PC-9 (cell line): ENCODE measurements at regions of chr3 and their contacts with region 1.

Region 1: GRCh38 chr3:172717493-172718088 is 6.7 kb upstream of the NCEH1 start:
- DNase-seq: no peak
- H3K4me3 ChIP-seq: no peak overlapping the region
- H3K27ac ChIP-seq: no peak overlapping the region
- H3K4me1 ChIP-seq: peaks cover 44% of the 10 kb centered on the region
- H3K27me3 ChIP-seq: no peaks in the 10 kb centered on the region
- CTCF ChIP-seq: peak; percentile 53; the same call in 1 of the 2 replicates

Region 2: DNA sequence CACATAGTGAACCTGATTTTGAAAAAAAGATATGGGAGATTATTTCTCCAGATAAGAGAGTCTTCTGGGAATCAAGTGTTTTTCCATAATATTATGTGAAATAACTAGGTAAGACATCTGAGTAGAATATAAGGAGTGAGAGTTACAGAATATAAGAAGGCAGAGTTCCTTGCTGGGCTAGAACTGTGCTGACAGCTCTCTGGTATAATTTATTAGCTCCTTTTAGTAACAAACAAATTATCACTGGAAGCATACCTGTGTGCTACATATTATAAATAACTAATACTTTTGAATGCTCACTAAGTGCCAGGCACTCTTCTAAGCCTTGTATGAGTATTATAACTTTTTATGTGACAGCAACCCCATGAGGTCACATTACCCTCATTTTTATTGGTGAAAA is 175.5 kb before region 1 on chr3:
- CTCF ChIA-PET with region 1: no interaction called
- POLR2A ChIA-PET with region 1: interaction called, 18 read pairs
- intact Hi-C with region 1: no loop called
- DNase-seq: no peak
- H3K4me3 ChIP-seq: no peak overlapping the region
- H3K27ac ChIP-seq: peak overlapping the region; percentile 74
- H3K4me1 ChIP-seq: peaks cover 47% of the 10 kb centered on the region
- H3K27me3 ChIP-seq: no peaks in the 10 kb centered on the region
- CTCF ChIP-seq: no peak

Region 3: DNA sequence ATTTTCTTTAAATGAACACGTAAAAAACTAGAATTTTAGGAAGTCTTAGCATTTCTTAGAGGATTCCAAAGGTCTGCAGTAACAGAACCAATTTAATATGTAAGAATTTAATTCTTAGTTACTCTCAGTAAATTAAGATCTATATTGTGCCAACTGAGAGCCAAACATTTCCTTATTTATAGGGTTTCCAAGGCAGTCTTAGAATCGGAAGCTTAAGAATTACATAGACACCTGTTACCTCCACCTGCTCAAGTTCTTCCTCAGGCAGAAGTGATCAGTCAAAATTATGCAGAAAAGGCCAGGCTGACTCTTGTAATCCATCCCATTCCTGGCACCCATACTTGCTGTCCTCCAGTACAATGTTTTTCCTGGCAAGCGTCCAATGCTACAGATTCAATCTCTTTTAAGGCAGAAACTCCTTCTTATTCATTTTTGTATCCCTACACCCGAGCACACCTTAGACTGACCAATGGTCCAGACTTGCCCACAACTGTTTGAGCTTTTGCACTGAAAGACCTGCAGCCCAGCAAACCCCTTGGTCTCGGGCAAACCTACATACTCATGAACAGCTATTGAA is 71.1 kb before region 1 on chr3:
- CTCF ChIA-PET with region 1: no interaction called
- POLR2A ChIA-PET with region 1: no interaction called
- intact Hi-C with region 1: no loop called
- DNase-seq: peak in 1 of 2 experiments; percentile 63
- H3K4me3 ChIP-seq: no peak overlapping the region
- H3K27ac ChIP-seq: no peak overlapping the region
- H3K4me1 ChIP-seq: peaks cover 6% of the 10 kb centered on the region; the same call in 1 of the 2 replicates
- H3K27me3 ChIP-seq: no peaks in the 10 kb centered on the region
- CTCF ChIP-seq: no peak

Region 4: DNA sequence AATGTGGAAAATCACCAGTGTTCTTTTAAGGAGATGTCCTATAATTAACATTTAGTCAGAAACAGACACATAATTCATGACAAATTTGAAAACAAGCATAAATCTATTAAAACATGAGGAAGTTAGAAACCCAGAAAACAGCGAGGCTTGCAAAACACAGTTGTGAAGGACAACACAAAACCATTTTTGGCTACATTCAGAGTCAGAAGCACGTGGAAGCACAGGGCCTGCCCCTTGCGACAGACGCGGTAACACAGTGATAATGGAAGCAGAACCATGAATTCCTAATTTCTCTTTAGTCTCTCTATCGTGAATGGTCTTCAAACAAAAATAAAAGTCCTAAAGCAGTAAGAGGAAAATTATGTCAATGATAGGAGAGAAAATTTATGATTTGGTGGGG is 19.0 kb before region 1 on chr3:
- CTCF ChIA-PET with region 1: interaction called, 9 read pairs
- POLR2A ChIA-PET with region 1: interaction called, 11 read pairs
- intact Hi-C with region 1: no loop called
- DNase-seq: no peak
- H3K4me3 ChIP-seq: no peak overlapping the region
- H3K27ac ChIP-seq: peak overlapping the region; percentile 0; the same call in 1 of the 2 replicates
- H3K4me1 ChIP-seq: peaks cover 4% of the 10 kb centered on the region; the same call in 1 of the 2 replicates
- H3K27me3 ChIP-seq: no peaks in the 10 kb centered on the region
- CTCF ChIP-seq: no peak

Region 5: GRCh38 chr3:172836390-172836997 is 118.9 kb after region 1 on chr3:
- CTCF ChIA-PET with region 1: no interaction called
- POLR2A ChIA-PET with region 1: no interaction called
- intact Hi-C with region 1: no loop called
- DNase-seq: peak in 1 of 2 experiments; percentile 38
- H3K4me3 ChIP-seq: no peak overlapping the region
- H3K27ac ChIP-seq: no peak overlapping the region
- H3K4me1 ChIP-seq: no peaks in the 10 kb centered on the region
- H3K27me3 ChIP-seq: no peaks in the 10 kb centered on the region
- CTCF ChIP-seq: peak; percentile 77

Region 6: GRCh38 chr3:173009410-173009809 is 291.8 kb after region 1 on chr3:
- CTCF ChIA-PET with region 1: no interaction called
- POLR2A ChIA-PET with region 1: no interaction called
- intact Hi-C with region 1: no loop called
- DNase-seq: no peak
- H3K4me3 ChIP-seq: no peak overlapping the region
- H3K27ac ChIP-seq: no peak overlapping the region
- H3K4me1 ChIP-seq: no peaks in the 10 kb centered on the region
- H3K27me3 ChIP-seq: no peaks in the 10 kb centered on the region
- CTCF ChIP-seq: no peak